A549 (cell line): ENCODE measurements at regions of chr16 and their contacts with region 1.

Region 1: DNA sequence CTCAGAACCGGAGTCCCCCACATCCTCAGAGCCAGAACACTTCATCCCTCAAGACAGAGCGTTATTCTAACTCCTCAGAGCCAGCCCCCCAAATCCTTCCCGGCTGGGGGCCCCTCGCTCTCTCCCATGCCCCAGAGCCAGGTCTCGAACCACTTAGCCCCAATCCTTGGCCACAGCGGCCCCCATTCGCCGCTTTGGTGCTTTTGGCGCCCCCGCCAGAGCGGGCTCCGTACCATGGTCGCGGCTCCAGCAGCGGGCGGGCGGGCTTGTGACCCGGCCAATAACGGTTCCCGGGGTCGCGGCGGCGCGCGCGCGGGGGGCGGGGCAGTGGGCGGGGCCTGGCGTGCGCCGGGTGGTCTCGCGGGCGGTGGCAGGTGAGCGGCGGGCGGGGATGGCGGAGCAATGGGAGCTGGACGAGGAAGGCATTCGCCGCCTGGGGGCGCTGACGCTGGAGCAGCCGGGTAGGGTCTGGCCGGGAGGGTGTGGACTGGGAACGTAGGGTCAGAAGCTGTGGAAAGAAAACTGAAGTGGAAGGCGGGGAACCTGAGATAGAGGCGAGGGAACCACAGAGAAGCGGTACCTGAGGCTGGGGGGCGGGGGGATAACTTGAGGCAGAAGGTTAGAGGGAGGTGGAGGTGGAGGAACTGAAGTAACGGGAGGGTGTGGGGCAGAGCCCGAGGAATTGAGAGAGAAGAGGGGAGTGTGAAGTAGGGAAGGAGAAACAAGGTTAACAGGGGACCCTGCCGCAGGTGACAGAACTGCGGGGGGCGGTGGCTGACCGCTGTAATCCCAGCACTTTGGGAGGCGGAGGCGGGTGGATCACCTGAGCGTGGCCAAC is at the starts of genes KCTD19 and LRRC36:
- DNase-seq: peak; percentile 80 to 93
- ATAC-seq: peak; percentile 99
- H3K4me3 ChIP-seq: peak within 1 kb of the TSS; percentile 60
- H3K27ac ChIP-seq: peak within 1 kb of the TSS; percentile 70 to 82
- H3K4me1 ChIP-seq: peaks cover 15% of the 10 kb centered on the region
- CTCF ChIP-seq: peak; percentile 62
- EP300 ChIP-seq: no peak
- POLR2A ChIP-seq: no peak
- RAD21 ChIP-seq: peak; percentile 39 to 61
- polyA plus RNA-seq, gene KCTD19: 1.1 and 2.4 TPM in 2 replicates
- polyA plus RNA-seq, gene LRRC36: 0.57 and 0.93 TPM in 2 replicates

Region 2: DNA sequence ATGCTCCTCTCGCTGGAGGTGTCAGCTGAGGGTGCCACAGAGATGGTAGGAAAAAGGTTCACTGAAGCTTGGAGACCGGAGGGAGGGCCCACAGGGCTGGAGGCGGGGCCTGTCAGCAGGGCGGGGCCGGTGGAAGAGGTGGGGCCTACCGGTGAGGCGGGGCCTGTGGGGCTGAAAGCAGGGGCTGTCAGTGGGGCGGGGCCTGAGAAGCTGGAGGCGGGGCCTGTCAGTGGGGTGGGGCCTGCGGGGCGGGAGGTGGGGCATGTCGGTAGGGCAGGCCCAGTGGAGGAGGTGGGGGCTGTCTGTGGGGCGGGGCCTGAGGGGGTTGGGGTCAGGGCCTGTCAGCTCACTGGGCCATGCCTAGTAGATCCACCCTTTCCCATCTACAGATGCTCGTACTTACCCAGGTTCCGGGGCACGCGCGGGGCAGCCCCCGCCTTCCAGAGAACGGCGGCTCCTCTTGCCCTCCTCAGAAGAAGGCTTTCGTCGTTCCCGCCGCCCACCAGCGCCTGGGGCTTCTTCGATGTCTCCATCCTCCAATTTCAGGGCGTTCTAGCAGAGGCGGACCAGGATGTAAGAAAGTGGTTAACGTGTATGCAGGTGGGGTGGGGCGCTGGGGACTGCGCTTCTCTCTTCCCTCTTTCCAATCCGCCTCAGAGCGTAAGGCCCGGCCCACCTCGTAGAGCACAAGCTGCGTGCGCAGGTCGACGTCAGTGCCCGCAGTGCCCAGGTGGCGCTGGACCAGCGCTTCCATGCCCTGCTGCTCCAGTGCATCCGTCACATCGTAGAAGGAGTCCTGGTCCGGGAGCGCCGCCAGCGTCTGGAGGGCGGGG is 89.9 kb before region 1 on chr16:
- CTCF ChIA-PET with region 1: no interaction called
- POLR2A ChIA-PET with region 1: no interaction called
- DNase-seq: peak; percentile 75 to 86
- ATAC-seq: peak; percentile 37 to 77
- H3K4me3 ChIP-seq: no peak overlapping the region
- H3K27ac ChIP-seq: no peak overlapping the region; a peak in 1 of 6 replicates
- H3K4me1 ChIP-seq: peaks cover 21% of the 10 kb centered on the region
- CTCF ChIP-seq: no peak
- EP300 ChIP-seq: no peak
- POLR2A ChIP-seq: no peak
- RAD21 ChIP-seq: no peak

Region 3: DNA sequence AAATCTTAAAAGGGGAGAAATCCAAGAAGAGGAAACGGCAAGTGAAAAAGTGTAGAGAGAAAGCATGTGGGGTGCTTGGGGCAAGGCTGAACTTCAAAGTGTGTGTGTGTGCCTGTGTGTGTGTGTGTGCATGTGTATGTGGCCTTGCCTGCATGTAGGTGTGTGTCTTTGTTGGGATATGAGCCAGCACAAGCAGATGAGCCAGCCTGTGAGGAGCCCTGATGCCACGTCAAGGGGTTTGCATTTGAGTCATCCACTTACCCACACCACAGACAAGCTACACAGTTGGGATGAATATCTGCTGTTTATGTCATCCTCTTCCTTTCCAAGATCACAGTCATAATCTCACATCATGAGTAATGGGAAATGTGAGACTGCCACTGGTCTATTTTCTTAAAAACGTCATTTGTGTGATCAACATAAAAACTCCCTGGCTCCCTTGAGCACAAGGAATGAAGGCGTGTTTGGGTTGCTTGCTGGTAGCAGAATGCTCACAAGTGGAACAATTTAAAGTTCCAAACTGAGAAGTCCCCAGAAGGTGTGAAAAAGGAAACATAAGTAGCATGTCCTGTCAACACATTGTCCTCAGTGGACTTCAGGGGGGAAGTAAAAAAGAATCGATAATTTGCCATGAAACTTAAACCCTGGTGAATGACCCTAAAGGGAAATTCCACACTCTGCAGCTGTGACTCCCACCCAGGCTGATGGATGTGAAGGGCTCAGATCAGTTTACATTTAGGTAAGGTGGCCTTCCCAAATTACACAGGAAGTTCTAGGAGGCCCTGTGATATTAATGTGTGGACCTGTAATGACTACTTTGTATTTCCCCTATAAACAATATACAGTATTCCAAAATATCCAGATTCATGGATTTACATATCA is 14.8 kb before region 1 on chr16:
- CTCF ChIA-PET with region 1: interaction called, 49 read pairs
- POLR2A ChIA-PET with region 1: interaction called, 3 read pairs
- DNase-seq: peak; percentile 92 to 94
- ATAC-seq: peak; percentile 97 to 99
- H3K4me3 ChIP-seq: no peak overlapping the region
- H3K27ac ChIP-seq: peak overlapping the region; percentile 32 to 76; a peak in 5 of 6 replicates
- H3K4me1 ChIP-seq: peaks cover 21% of the 10 kb centered on the region
- CTCF ChIP-seq: no peak
- EP300 ChIP-seq: peak in 1 of 2 experiments; percentile 37; a peak in 1 of 5 replicates
- POLR2A ChIP-seq: no peak
- RAD21 ChIP-seq: no peak

Region 4: GRCh38 chr16:67339453-67339852 is 12.8 kb after region 1 on chr16:
- CTCF ChIA-PET with region 1: interaction called, 25 read pairs
- POLR2A ChIA-PET with region 1: no interaction called
- DNase-seq: peak in 1 of 2 experiments; percentile 45
- ATAC-seq: peak; percentile 59 to 75; a peak in 5 of 6 replicates
- H3K4me3 ChIP-seq: no peak overlapping the region
- H3K27ac ChIP-seq: no peak overlapping the region
- H3K4me1 ChIP-seq: no peaks in the 10 kb centered on the region
- CTCF ChIP-seq: peak; percentile 37
- EP300 ChIP-seq: no peak
- POLR2A ChIP-seq: no peak
- RAD21 ChIP-seq: peak; percentile 53 to 62; a peak in 4 of 5 replicates

Region 5: DNA sequence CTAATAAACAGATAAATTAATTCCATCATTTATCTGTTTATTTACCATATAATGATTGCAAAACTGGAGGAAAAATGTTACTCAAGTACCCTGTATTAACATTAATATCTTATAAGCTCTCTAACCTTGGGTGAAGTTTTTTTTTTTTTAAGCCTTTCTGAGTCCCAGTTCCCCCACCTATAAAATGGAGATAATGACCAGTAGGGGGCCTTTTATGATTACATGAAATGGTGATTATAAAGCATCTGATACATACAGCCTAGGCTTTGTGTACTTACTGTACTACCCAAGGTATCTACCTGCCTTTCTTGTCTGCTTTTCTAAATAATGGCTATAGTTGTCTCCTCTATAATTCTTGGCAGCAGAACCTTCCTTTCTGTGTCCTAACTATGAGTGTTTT is 22.5 kb after region 1 on chr16:
- CTCF ChIA-PET with region 1: interaction called, 23 read pairs
- POLR2A ChIA-PET with region 1: no interaction called
- DNase-seq: peak in 1 of 2 experiments; percentile 41
- ATAC-seq: peak; percentile 62 to 88; a peak in 3 of 6 replicates
- H3K4me3 ChIP-seq: no peak overlapping the region
- H3K27ac ChIP-seq: no peak overlapping the region
- H3K4me1 ChIP-seq: peaks cover 20% of the 10 kb centered on the region
- CTCF ChIP-seq: peak; percentile 54
- EP300 ChIP-seq: no peak
- POLR2A ChIP-seq: no peak
- RAD21 ChIP-seq: peak; percentile 27 to 35; a peak in 2 of 5 replicates

Region 6: GRCh38 chr16:67393035-67393787 is 66.5 kb after region 1 on chr16 and contains the start of gene TPPP3:
- CTCF ChIA-PET with region 1: interaction called, 11 read pairs
- POLR2A ChIA-PET with region 1: interaction called, 3 read pairs
- DNase-seq: peak; percentile 73
- ATAC-seq: peak; percentile 56 to 80
- H3K4me3 ChIP-seq: peak within 1 kb of the TSS; percentile 41
- H3K27ac ChIP-seq: peak within 1 kb of the TSS; percentile 46 to 75; a peak in 5 of 6 replicates
- H3K4me1 ChIP-seq: peaks cover 15% of the 10 kb centered on the region
- CTCF ChIP-seq: peak; percentile 15; the same call in 1 of the 3 replicates
- EP300 ChIP-seq: no peak
- POLR2A ChIP-seq: 0 out of 2 replicates have a peak, but pooled peaks have one; percentile 6
- RAD21 ChIP-seq: peak in 1 of 2 experiments; percentile 34; a peak in 1 of 5 replicates
- polyA plus RNA-seq, gene TPPP3: 9.4 and 10.6 TPM in 2 replicates

Region 7: DNA sequence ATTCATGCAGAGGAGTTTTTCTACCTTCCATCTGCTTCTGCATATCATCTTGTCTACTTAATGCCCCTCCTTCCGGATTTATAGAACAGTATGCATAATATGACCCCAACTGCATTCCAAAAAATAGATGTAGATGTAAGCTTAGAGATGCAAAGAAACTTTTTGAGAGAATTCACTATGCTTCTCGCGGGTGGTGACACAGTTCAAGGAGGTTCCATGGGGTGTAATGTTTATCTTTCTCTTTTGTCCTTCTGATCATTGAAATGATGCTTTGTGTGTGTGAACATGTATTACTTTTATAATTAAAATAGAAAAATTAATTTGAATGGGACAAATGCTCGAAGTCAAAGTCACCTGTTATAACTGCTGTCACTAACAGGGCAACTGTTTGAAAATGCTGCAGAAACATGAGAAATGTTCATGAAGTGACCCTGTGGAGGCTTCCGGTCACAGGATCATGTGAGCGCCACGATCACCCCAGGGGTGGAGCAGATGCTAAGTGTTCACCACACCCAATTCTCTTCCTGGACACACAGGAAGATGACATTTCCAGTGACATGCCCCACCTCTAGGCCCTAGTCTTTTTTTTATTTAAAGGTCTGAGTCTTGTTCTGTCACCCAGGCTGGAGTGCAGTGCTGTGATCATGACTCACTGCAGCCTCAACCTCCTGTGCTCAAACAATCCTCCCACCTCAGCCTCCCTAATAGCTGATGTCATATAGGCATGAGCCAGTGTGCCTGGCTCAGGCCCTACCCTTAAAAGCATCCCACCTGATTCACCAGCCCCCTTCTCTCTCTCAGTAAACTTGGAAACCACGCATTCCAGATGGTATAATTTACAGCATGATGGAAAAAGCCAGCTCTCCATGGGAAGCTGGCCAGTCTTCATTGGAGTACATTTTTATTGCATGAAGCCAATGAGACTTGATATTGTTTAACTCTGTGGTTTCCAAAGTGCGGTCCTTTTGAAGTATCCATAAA is 177.6 kb after region 1 on chr16:
- CTCF ChIA-PET with region 1: no interaction called
- POLR2A ChIA-PET with region 1: no interaction called
- DNase-seq: peak in 1 of 2 experiments; percentile 31
- ATAC-seq: peak; percentile 24 to 28; a peak in 3 of 6 replicates
- H3K4me3 ChIP-seq: no peak overlapping the region
- H3K27ac ChIP-seq: no peak overlapping the region
- H3K4me1 ChIP-seq: peaks cover 8% of the 10 kb centered on the region; the same call in 1 of the 3 replicates
- CTCF ChIP-seq: no peak
- EP300 ChIP-seq: no peak
- POLR2A ChIP-seq: no peak
- RAD21 ChIP-seq: no peak